ENCODE measurements at regions of chr7 and their contacts with region 1.

Region 1: DNA sequence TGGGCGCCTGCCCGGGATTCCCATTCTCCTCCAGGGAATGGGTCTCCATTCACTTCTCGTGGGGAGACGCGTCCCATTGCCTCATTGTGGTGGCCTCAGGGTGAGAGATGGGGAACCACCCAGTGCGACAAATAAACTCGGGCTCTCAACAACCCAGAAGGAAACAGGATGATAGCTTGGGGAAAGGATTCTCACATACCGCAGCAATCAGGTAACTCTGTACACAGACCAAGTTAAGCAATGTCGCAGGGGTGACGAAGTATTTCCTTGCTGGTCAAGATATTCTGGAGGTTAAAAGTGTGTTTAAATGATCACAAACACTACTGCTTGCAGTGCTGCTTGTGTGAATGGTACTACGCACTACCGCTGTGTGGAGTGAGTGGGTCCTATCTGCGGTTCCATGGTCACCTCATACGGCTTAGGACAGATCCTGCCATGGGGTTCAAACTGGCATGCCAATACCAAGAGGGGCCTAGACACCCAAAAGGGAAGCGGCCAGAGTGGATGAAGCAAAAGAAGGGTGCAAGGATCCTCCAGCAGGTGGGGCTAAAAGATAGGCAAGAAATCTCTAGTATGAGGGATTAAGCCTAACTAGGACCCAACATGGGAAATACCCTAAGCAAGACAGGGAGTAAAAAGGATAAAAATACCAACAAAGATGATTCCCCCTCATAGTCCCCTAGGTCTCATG is 143.8 kb upstream of the TMEM106B start:
- DNase-seq: peak; percentile 49 to 81 (median 57)
- H3K4me3 ChIP-seq: no peak overlapping the region
- H3K27ac ChIP-seq: no peak overlapping the region
- H3K4me1 ChIP-seq: no peaks in the 10 kb centered on the region
- H3K27me3 ChIP-seq: no peaks in the 10 kb centered on the region
- CTCF ChIP-seq: peak; percentile 49 to 84 (median 74)
- POLR2A ChIP-seq: no peak

Region 2: DNA sequence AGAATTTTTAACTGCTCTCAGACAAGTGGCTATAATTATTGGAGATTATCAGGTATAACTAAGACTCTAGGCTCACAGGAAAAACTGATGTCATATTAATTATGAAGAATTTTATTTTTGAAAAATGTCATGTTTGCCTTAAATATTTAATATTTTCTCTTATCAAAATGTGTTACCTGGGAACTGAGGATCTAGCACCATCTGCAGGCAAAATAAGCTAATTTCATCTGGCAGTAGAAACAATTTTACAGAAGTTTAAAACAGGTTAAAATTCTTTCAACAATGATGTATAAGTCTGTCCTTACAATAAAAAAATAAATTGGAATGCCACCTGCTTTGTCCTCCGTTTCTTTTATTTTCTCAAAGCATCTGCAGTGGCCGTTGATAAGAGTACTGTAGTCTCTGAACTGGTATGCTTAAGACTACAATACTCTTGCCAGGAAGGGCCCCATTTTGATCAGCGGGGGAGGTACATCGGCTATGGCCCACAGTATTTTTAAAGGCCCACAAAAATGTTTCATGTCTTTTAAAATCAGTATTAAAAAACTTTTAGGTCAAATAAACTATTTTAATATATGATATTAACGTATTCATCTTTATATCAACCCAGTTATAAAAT is 255.1 kb after region 1 on chr7:
- intact Hi-C with region 1: loop called (anchors 2 to 5 kb)
- DNase-seq: peak in 1 of 7 donors; percentile 10
- H3K4me3 ChIP-seq: no peak overlapping the region
- H3K27ac ChIP-seq: no peak overlapping the region
- H3K4me1 ChIP-seq: no peaks in the 10 kb centered on the region
- H3K27me3 ChIP-seq: no peaks in the 10 kb centered on the region
- CTCF ChIP-seq: peak; percentile 53 to 84 (median 74)
- POLR2A ChIP-seq: no peak

Region 3: GRCh38 chr7:12328888-12329770 is 261.8 kb after region 1 on chr7:
- intact Hi-C with region 1: loop called in 1 of 2 experiments (anchors 5 kb)
- DNase-seq: no peak
- H3K4me3 ChIP-seq: no peak overlapping the region
- H3K27ac ChIP-seq: no peak overlapping the region
- H3K4me1 ChIP-seq: no peaks in the 10 kb centered on the region
- H3K27me3 ChIP-seq: no peaks in the 10 kb centered on the region
- CTCF ChIP-seq: no peak
- POLR2A ChIP-seq: no peak